Right ventricle myocardium superior (tissue), 1 donor: ENCODE measurements at regions of chr5 and their contacts with region 1.

Region 1: GRCh38 chr5:151447174-151448037 is at the start of gene SLC36A1:
- DNase-seq: peak; percentile 97
- ATAC-seq: peak; percentile 96
- total RNA-seq, gene SLC36A1: 4.4 TPM

Region 2: DNA sequence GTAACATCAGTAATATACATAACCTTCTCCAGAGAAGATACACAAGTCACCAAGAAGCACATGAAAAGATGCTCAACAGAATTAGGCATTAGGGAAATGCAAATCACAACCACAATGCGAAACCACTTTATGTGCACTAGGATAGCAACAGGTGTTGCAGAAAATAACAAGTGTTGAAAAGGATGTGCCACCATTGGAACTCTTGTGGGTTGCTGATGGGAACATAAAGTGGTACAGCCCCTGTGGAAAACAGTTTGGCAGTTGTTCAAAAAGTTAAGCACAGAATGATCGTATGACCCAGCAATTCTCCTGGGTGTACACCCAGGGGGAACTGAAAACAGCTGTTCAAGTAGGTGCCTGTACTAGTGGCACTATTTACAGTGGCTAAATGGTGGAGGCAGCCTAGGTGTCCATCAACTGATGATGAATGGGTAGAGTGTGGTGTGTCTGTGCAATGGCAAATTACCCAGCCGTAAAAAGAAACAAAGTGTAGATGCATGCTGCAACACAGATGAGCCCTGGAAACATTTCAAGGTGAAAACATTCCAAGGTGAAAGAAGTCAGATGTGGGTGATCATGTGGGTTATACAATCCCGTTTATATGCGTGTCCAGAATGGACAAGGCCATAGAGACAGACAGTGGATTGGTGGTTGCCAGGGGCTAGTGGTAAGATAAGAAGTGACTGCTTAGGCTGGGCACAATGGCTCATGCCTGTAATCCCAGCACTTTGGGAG is 250.7 kb before region 1 on chr5:
- intact Hi-C with region 1: no loop called
- DNase-seq: no peak
- ATAC-seq: peak; percentile 37

Region 3: DNA sequence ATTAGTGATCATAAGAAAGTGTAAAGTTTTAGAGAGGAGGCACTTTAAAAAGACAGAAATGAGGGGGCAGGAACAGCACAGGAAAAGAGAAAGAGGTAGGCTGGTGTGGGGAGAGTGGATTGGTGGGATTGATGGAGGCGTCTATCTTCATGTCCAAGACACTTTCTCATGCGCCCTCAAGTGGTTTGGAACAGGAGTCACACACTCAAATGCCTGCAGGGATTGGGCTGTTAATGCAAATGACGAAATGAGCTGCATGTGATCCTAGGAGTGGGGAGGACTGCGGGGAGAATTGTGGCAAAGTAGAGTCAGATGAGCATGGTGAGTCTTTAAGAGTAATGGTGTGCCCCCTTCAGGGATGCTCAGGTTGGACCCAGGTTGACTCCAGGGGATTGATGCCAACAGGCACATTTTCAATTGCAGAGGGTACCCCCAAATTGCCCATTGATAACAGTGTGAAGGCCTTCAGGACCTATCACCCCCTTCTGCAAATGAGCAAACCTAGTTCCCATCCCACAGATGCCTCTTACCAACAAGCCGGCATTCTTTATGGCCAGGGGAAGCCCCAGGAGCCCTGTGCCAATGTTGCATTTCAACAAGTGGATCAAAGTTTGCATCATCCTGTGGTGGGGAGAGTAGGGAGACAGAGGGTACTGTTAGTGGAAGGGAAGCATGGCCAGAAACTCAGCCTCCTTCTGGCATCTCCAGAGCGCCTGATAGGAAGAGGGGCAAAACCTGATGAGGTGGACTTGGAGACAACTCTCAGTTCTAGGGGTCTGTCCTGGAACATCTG is 149.1 kb before region 1 on chr5:
- intact Hi-C with region 1: no loop called
- DNase-seq: no peak
- ATAC-seq: no peak

Region 4: GRCh38 chr5:151499501-151500035 is 52.2 kb after region 1 on chr5:
- intact Hi-C with region 1: loop called (anchors 1 kb)
- DNase-seq: no peak
- ATAC-seq: peak; percentile 13

Region 5: DNA sequence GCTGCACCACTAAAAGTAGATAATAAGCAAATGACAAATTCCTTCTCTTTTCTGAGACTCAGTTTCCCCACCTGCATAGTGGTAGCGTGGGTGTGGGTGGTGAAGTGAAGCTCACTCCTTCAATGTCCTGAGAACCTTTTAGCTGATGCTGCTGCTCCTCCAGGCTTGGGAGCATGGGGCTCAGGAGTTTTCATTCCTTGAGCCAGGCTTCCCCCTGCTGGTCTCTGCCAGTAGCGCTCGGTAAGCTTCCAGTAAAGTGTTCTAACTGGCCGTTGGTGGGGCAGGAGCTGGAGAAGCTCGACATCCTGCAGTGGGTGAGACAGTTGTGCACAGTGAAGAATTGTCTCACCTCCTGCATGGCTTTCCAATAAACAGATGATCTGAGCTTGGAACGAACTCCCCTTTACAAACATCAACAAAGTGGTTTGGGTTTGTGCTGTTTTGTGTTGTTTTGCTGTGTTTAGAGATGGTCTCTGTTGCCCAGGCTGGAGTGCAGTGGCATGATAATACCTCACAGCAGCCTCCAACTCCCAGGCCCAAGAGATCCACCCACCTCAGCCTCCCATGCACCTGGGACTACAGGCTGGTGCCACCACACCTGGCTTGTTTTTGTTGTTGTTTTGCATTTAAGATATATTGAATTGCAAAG is 204.7 kb after region 1 on chr5:
- intact Hi-C with region 1: loop called (anchors 5 kb)
- DNase-seq: peak; percentile 86
- ATAC-seq: peak; percentile 97

Region 6: DNA sequence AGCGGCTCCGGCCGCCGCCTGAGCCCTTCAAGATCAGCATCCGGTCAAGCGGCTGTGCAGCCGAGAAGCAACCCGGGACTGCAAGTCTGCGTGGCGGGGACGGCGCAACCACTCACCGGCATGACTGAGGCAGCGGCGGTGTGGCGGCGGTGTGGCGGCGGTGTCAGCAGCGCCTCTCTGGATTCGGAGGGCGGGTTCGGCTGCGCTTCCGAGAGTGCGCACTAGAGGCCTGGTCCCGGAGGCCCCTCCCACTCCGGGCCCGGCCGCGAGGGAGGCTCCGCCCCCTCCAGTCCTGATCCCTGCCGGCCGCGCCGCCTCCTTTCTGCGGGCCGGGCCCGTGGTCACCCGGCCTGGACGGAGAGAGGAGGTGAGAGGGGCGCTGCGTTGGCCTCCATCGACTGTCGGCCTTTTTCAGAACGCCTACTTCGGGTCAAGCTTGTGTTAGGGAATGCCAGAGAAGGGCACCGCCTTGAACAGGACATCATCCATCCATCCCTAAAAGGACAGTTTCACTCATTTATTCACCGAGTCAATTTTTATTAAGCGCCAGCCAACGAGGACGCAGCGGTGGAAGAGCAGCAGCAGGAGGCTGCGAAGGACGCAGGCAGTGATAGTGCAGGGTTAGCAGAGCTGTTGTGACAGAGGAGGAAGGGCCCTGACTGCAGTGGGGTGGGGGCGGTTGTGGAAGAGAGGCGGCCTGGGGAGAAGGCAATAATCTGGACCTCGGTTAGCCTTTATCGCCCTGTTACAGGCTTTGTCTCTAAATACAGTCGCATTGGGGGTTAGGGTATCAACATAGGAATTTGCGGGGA is 311.2 kb after region 1 on chr5 and contains the start of gene ATOX1:
- intact Hi-C with region 1: loop called (anchors 10 kb)
- DNase-seq: peak; percentile 96
- ATAC-seq: peak; percentile 100
- total RNA-seq, gene ATOX1: 61.7 TPM